ENCODE measurements at regions of chr19 and their contacts with region 1.

Region 1: DNA sequence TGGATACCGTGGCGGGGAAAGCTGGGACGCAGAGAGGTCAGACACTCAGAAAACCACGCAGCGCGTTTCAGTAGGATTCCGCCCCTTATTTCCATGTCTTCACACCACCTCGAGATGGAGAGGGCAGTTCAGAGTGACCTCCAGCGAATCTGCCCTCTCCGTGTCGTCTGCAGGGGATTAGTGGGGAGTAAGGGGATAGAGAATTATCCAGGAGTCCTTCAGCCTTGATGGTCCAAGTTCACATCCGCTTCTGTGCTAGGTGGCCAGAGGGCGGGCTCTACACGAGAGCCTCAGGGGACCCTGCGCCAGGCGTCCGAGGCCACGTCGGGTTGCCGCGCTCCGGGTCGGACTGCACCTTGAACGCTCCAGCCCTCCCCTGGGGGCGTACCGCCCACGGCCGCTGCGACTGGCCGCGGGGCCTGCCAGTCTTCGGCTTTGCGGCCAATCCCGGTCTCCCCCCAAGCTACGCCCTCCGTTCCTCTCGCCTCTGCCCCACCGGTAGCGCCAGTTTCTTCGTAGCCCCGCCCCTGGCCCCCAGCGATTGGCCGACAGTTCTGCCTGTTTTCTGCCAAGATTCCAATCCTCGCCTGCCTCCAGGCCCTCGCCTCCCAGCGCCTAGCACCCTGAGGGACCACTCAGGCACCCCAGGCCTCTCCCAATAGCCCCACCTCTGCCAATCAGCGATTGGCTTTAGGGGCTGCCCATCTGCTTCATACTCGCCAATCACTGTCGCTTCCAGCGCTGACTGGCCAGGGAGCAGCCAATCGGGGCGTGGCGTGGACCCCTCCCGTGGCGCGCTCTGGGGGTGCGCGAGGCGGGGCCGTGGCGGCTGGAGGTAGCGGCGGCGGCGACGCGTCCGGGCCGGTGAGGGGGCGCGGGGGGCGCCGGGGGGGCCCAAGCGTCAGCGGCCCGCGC is at the start of gene SLC25A42:
- DNase-seq: peak; percentile 98 to 100 (median 100)

Region 2: GRCh38 chr19:19033426-19034203 is 29.8 kb before region 1 on chr19 and contains the starts of genes ARMC6 and SUGP2:
- intact Hi-C with region 1: loop called (anchors 1 kb)
- DNase-seq: peak; percentile 69 to 95 (median 90)

Region 3: GRCh38 chr19:19139876-19140229 is 76.4 kb after region 1 on chr19:
- intact Hi-C with region 1: loop called (anchors 5 kb)
- DNase-seq: no peak

Measured in head of caudate nucleus (tissue), 42 donors.